CD14-positive monocyte (primary cell): ENCODE measurements at regions of chr1 and their contacts with region 1.

Region 1: DNA sequence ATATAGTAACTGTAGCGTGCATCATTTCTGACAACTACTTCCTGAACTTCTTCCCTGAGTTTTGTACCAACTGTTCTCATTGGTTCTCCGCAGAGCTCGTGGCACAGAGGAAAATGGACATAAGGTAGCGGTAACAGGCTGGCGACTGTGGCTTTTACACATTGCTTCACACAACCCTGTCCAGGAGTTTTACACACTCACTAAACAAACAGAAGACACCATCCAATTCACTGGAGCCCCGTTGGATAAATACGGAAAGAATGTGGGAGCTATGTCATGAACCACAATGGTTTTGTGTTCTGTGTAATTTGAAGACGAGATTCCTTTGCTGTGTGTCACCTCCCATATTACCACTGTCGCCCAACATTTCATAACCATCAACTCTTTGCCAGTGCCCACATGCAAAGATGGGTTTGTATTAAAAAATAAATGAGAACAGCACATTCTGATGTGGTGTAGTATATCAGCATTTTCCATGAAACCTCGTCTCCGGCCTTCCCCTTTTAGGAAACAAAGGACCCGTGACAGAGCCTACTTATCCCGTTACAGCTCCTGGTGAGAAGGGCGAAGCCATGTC is 47.3 kb upstream of the ENAH start:
- DNase-seq: no peak
- H3K4me3 ChIP-seq: no peak overlapping the region
- H3K4me3 Mint-ChIP-seq: no peak overlapping the region
- H3K27ac ChIP-seq: no peak overlapping the region
- H3K27ac Mint-ChIP-seq: no peak overlapping the region
- H3K4me1 ChIP-seq: no peaks in the 10 kb centered on the region
- H3K4me1 Mint-ChIP-seq: no peaks in the 10 kb centered on the region
- H3K27me3 ChIP-seq: no peaks in the 10 kb centered on the region
- H3K27me3 Mint-ChIP-seq: peaks cover 0 to 3% (median 2%) of the 10 kb centered on the region in 3 donors
- CTCF ChIP-seq: no peak

Region 2: GRCh38 chr1:225428068-225428880 is 272.0 kb before region 1 on chr1:
- intact Hi-C with region 1: no loop called
- DNase-seq: peak; percentile 85 to 87 (median 85)
- H3K4me3 ChIP-seq: peak overlapping the region; percentile 61 to 92 (median 87)
- H3K4me3 Mint-ChIP-seq: peak overlapping the region; percentile 86 to 93
- H3K27ac ChIP-seq: peak overlapping the region; percentile 82 to 83
- H3K27ac Mint-ChIP-seq: peak overlapping the region; percentile 86 to 95 (median 94)
- H3K4me1 ChIP-seq: peaks cover 43 to 54% of the 10 kb centered on the region in 2 donors
- H3K4me1 Mint-ChIP-seq: peaks cover 51% of the 10 kb centered on the region
- H3K27me3 ChIP-seq: no peaks in the 10 kb centered on the region
- H3K27me3 Mint-ChIP-seq: peaks cover 0 to 7% (median 0%) of the 10 kb centered on the region in 3 donors
- CTCF ChIP-seq: no peak

Region 3: DNA sequence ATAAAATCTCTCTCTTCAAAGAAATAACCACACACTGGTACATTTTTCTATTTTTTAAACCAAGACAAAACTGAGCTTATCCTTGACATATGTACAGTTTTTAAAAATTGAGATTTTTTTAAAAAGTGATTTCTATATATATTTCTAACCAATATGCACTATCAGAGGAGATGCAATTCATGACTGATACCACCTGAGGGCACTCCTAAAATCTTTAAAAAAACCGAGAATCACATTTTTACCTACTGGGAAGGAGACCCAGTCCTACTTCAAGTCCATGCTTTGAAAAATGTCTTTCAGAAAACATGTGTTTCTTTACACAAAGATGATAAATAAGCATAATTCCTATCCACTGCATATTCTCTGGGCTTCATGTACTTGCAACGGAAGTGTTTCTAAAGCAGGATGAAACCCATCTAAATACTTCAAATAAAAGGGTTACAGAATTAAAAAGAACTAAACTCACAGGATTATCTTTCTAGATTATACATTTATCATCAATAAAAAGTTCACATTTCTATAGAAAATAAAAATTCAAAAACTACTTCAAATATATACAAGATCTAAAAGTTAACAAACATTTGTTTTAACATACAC is 145.9 kb before region 1 on chr1:
- intact Hi-C with region 1: no loop called
- DNase-seq: peak in 1 of 3 donors; percentile 10
- H3K4me3 ChIP-seq: no peak overlapping the region
- H3K4me3 Mint-ChIP-seq: no peak overlapping the region
- H3K27ac ChIP-seq: no peak overlapping the region
- H3K27ac Mint-ChIP-seq: no peak overlapping the region
- H3K4me1 ChIP-seq: no peaks in the 10 kb centered on the region
- H3K4me1 Mint-ChIP-seq: peaks cover under 1% of the 10 kb centered on the region
- H3K27me3 ChIP-seq: no peaks in the 10 kb centered on the region
- H3K27me3 Mint-ChIP-seq: no peaks in the 10 kb centered on the region
- CTCF ChIP-seq: peak; percentile 55

Region 4: DNA sequence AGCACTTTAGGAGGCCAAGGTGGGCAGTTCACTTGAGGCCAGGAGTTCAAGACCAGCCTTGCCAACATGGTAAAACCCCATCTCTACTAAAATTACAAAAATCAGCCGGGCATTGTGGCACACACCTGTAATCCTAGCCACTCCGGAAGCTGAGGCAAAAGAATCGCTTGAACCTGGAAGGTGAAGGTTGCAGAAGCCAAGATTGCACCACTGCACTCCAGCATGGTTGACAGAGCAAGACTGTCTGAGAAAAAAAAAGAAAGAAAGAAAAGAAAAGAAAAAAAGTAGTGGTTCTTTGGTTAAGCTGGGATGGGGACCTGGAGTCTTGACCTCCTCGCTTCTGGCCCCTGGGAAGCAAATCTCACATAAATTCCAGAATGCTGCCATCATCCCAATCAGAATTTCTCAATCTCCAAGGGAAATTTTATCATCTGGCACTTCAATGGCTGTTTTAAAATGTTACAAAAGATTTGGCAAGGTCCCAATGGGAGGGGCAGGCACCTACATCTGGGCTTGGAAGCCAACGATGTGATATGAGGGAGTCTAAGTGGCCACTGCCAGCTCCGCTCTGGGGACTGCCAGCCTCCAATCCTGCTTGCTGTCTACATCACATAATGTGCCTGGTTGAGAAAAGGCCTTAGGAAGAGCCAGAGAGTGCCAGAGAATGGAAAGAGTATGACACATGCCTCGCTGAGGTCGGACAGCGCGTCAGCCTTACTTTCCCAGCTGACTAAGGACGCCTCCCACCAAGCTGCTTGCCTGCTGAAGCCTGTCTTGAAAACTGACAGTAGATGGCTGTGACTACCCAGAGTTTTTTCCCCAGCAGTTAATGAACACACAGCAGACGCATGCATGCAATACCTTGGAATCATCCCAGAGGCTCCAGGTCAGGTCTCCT is 35.2 kb after region 1 on chr1:
- intact Hi-C with region 1: no loop called
- DNase-seq: no peak
- H3K4me3 ChIP-seq: no peak overlapping the region
- H3K4me3 Mint-ChIP-seq: no peak overlapping the region
- H3K27ac ChIP-seq: no peak overlapping the region
- H3K27ac Mint-ChIP-seq: no peak overlapping the region
- H3K4me1 ChIP-seq: no peaks in the 10 kb centered on the region
- H3K4me1 Mint-ChIP-seq: peaks cover 8% of the 10 kb centered on the region
- H3K27me3 ChIP-seq: no peaks in the 10 kb centered on the region
- H3K27me3 Mint-ChIP-seq: peaks cover 2 to 10% (median 3%) of the 10 kb centered on the region in 3 donors
- CTCF ChIP-seq: no peak

Region 5: GRCh38 chr1:225888898-225889601 is 188.8 kb after region 1 on chr1 and contains the start of gene LEFTY1:
- intact Hi-C with region 1: no loop called
- DNase-seq: no peak
- H3K4me3 ChIP-seq: no peak within 1 kb of the TSS
- H3K4me3 Mint-ChIP-seq: no peak within 1 kb of the TSS
- H3K27ac ChIP-seq: no peak within 1 kb of the TSS
- H3K27ac Mint-ChIP-seq: no peak within 1 kb of the TSS
- H3K4me1 ChIP-seq: peaks cover 0 to 6% of the 10 kb centered on the region in 2 donors
- H3K4me1 Mint-ChIP-seq: peaks cover 6% of the 10 kb centered on the region
- H3K27me3 ChIP-seq: peaks cover 0 to 5% of the 10 kb centered on the region in 2 donors
- H3K27me3 Mint-ChIP-seq: peaks cover 9 to 14% (median 10%) of the 10 kb centered on the region in 3 donors
- CTCF ChIP-seq: no peak
- polyA plus RNA-seq, gene LEFTY1: 0.13 TPM in 1 of 3 donors, not detected in the others

Region 6: GRCh38 chr1:226109829-226110248 is 409.6 kb after region 1 on chr1:
- intact Hi-C with region 1: loop called in 1 of 2 experiments (anchors 10 kb)
- DNase-seq: peak; percentile 56 to 70 (median 68)
- H3K4me3 ChIP-seq: peak overlapping the region; percentile 49 to 83 (median 71)
- H3K4me3 Mint-ChIP-seq: peak overlapping the region; percentile 98 to 99
- H3K27ac ChIP-seq: peak overlapping the region in 1 of 2 donors; percentile 68
- H3K27ac Mint-ChIP-seq: peak overlapping the region; percentile 31 to 88 (median 81)
- H3K4me1 ChIP-seq: peaks cover 15 to 22% of the 10 kb centered on the region in 2 donors
- H3K4me1 Mint-ChIP-seq: peaks cover 17% of the 10 kb centered on the region
- H3K27me3 ChIP-seq: no peaks in the 10 kb centered on the region
- H3K27me3 Mint-ChIP-seq: peaks cover 2 to 5% (median 4%) of the 10 kb centered on the region in 3 donors
- CTCF ChIP-seq: no peak